ENCODE measurements at regions of chr10 and their contacts with region 1.

Region 1: DNA sequence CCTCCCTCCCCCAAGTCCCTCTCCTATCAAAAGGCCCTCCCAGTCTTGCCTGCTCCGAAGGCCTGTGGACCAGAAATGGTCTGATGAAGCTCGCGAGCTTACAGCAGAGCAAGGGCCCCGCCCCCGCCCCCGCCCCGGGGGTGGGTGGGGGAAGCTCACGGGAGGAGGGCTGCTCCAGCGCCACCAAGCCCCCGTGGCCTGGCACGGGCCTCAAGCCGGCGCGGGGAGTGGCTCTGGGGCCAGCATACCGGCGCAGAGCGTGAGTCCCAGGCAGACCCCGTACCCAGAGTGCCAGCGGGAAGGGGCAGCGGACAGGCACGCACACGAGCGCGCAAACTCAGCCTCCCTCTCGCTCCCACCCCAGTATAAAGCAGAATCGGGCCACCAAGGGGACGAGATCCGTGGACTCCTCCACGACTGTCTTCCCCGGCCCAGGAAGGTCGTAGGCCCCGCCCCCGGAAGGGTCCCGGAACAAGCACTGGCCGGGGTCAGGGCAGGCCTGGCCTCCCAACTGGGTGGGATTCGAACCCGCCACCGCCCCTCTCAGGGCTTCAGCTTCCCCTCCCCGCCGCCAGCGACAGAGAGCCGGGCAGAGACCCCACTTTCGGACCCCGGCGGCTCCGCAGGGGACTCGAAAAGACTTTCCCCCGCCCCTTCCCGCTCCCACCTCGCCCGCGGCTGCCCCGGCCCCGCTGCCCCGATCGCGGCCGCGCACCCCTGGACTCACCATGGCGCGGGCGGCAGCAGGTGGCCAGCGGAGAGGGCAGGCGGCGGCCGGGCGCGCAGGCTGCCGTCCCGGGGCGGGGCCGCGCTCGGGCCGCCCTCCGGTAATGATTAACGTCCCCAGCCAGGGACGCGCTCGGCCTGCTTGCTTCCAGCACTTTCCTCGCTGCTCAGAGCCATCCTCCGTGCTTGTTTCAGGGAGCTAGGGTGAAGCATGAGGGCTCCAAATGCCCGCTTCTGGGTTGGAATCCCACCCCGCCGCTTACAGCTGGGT is at the start of gene PCBD1:
- DNase-seq: no peak
- H3K4me3 ChIP-seq: peak within 1 kb of the TSS; percentile 68
- CTCF ChIP-seq: no peak

Region 2: DNA sequence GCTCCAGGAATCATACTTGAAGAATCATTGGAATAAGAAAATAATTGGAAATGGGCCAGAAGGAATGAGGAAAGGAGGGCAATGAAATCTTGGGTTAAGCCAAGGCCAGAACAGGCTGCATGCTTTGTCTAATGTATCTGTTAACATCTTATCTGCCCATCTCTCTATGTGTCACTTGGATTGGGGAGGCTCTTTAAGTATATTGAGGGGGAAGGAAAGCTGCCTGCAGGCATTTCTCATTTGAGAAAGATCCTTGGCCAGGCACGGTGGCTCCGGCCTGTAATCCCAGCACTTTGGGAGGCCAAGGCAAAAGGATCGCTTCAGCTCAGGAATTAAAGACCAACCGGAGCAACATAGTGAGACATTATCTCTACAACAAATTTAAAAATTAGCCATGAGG is 14.1 kb before region 1 on chr10:
- CTCF ChIA-PET with region 1: interaction called, 14 read pairs
- POLR2A ChIA-PET with region 1: no interaction called
- DNase-seq: no peak
- H3K4me3 ChIP-seq: no peak overlapping the region
- CTCF ChIP-seq: no peak